Activated CD4-positive, alpha-beta memory T cell treated with anti-CD3 and anti-CD28 coated beads for 36 hours (primary cell): ENCODE measurements at regions of chr10 and their contacts with region 1.

Region 1: DNA sequence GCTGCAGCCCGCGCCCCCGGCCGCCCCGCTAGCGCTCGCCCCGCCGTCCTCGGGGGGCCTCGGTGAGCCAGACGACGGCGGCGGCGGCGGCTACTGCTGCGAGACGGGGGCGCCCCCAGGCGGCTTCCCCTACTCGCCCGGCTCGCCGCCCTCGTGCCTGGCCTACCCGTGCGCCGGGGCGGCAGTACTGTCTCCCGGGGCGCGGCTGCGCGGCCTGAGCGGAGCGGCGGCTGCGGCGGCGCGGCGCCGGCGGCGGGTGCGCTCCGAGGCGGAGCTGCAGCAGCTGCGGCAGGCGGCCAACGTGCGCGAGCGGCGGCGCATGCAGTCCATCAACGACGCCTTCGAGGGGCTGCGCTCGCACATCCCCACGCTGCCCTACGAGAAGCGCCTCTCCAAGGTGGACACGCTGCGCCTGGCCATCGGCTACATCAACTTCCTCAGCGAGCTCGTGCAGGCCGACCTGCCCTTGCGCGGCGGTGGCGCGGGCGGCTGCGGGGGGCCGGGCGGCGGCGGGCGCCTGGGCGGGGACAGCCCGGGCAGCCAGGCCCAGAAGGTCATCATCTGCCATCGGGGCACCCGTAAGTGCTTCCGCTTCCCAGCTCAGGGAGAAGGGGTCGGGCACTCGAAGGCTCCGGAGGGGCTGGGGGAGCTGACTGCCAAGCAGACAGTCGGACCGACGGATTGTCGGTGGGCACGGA is 774 bp downstream of the PTF1A start:
- DNase-seq: no peak
- H3K4me3 Mint-ChIP-seq: no peak overlapping the region
- H3K27ac Mint-ChIP-seq: no peak overlapping the region
- H3K4me1 Mint-ChIP-seq: peaks cover 4% of the 10 kb centered on the region
- H3K27me3 Mint-ChIP-seq: peaks cover 60% of the 10 kb centered on the region

Region 2: GRCh38 chr10:23173214-23174073 is 19.4 kb before region 1 on chr10:
- CTCF ChIA-PET with region 1: no interaction called
- POLR2A ChIA-PET with region 1: no interaction called
- intact Hi-C with region 1: loop called (anchors 2 kb)
- DNase-seq: no peak
- H3K4me3 Mint-ChIP-seq: no peak overlapping the region
- H3K27ac Mint-ChIP-seq: no peak overlapping the region
- H3K4me1 Mint-ChIP-seq: peaks cover 4% of the 10 kb centered on the region
- H3K27me3 Mint-ChIP-seq: peaks cover 63% of the 10 kb centered on the region

Region 3: DNA sequence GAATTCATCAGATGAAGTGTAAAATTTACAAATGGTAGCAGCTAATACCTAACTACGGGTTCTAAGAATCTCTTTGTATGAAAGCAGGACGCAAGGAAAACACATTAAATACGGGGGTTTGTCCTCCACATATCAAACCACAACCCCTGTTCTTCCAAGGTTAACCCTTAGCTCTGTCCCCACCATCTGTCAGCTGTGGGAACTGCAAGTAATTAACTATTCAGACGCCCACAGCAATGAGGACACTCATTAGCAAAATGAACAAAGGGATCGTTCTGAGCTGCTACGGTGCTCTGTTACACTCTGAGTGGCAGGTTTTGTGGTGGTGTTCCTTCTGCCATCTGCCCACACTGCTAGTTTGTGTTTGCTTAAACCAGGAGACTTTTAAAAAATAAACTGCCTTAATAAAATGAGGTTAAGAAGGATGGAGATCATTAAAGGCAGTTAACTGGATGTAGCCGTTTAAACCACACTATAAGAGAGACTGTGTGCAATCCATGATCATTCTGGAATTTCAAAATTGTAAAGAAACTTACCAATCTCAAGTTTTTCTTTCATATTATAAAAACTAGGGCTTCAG is 100.3 kb after region 1 on chr10:
- CTCF ChIA-PET with region 1: no interaction called
- POLR2A ChIA-PET with region 1: no interaction called
- intact Hi-C with region 1: no loop called
- DNase-seq: peak; percentile 53
- H3K4me3 Mint-ChIP-seq: no peak overlapping the region
- H3K27ac Mint-ChIP-seq: no peak overlapping the region
- H3K4me1 Mint-ChIP-seq: peaks cover 2% of the 10 kb centered on the region
- H3K27me3 Mint-ChIP-seq: peaks cover 14% of the 10 kb centered on the region

Region 4: GRCh38 chr10:23694446-23694920 is 501.6 kb after region 1 on chr10:
- CTCF ChIA-PET with region 1: no interaction called
- POLR2A ChIA-PET with region 1: no interaction called
- intact Hi-C with region 1: loop called (anchors 10 kb)
- DNase-seq: no peak
- H3K4me3 Mint-ChIP-seq: no peak overlapping the region
- H3K27ac Mint-ChIP-seq: no peak overlapping the region
- H3K4me1 Mint-ChIP-seq: peaks cover 3% of the 10 kb centered on the region
- H3K27me3 Mint-ChIP-seq: peaks cover 43% of the 10 kb centered on the region